ENCODE measurements at regions of chr11 and their contacts with region 1.

Region 1: DNA sequence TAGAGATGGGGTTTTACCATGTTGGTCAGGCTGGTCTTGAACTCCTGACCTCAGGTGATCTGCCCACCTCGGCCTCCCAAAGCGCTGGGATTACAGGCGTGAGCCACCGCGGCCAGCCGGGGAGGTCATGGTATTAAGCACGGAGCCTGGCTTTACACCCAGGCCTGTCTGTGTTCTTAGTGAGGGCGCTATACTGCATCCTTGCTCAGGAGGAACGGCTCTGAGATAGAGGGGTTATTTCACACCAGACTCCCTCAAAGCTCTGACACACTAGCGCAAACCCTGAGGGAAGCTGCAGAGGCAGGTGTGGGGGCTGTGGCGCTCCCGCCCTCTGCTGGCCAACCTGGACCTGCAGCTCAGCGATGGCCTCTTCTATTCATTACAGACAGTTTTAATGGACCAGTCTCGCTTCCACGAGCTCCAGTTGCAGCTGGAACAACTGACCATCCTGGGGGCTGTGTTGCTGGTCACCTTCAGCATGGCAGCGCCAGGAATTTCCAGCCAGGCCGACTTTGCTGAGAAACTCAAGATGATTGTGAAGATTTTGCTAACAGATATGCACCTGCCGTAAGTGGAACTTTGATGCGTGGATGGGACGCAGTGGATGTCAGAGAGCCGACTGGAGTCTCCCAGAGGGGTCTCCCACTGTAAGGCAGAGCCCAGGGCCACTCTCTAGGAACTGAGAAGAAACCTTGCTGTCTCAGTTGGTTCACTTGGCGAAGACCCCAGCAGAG is 26.2 kb downstream of the TCP11L1 start:
- DNase-seq: peak in 1 of 2 donors; percentile 74
- H3K4me3 ChIP-seq: no peak overlapping the region
- H3K27ac ChIP-seq: no peak overlapping the region
- H3K4me1 ChIP-seq: no peaks in the 10 kb centered on the region
- H3K27me3 ChIP-seq: no peaks in the 10 kb centered on the region
- CTCF ChIP-seq: peak; percentile 54 to 72 (median 70)

Region 2: GRCh38 chr11:32960553-32961164 is 105.0 kb before region 1 on chr11:
- intact Hi-C with region 1: loop called (anchors 1 kb)
- DNase-seq: no peak
- H3K4me3 ChIP-seq: no peak overlapping the region
- H3K27ac ChIP-seq: no peak overlapping the region
- H3K4me1 ChIP-seq: no peaks in the 10 kb centered on the region
- H3K27me3 ChIP-seq: no peaks in the 10 kb centered on the region
- CTCF ChIP-seq: peak; percentile 50 to 68 (median 60)

Region 3: DNA sequence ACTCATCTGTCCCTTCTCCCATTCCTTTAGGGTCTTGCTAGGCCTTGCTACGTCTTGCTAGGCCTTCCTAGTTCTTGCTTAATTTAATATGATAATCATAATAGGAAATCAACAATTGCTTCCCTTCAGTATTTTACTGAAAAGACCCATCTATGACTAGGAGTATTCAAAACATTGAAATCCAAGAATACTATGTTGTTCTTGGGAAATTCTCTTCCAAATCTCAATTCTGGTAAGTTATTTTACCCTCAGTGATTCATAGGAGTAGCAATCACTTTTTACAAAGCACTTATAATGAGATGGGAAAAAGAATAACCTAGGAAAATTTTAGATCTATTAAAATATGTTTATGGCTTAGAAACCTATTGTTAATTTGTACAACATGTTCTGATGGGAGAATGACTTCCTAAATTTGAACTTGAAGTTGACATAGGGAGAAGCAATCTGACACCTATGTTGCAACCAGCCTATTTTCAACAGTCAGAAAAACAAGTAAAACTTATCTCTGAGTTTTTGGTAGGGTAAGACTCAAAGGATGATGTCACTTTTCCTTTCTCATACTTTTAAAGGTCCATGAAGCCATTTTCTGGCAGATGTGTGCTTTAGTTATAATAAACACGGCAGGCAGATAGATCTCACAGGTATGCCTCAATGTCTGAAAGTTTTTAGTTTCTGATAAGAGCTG is 162.1 kb after region 1 on chr11:
- intact Hi-C with region 1: no loop called
- DNase-seq: no peak
- H3K4me3 ChIP-seq: no peak overlapping the region
- H3K27ac ChIP-seq: peak overlapping the region; percentile 45 to 55
- H3K4me1 ChIP-seq: peaks cover 0 to 2% of the 10 kb centered on the region in 2 donors
- H3K27me3 ChIP-seq: no peaks in the 10 kb centered on the region
- CTCF ChIP-seq: no peak